ENCODE measurements at regions of chr14 and their contacts with region 1.

Region 1: GRCh38 chr14:56514663-56515371 is 64.8 kb upstream of the TMEM260 start:
- DNase-seq: no peak

Region 2: DNA sequence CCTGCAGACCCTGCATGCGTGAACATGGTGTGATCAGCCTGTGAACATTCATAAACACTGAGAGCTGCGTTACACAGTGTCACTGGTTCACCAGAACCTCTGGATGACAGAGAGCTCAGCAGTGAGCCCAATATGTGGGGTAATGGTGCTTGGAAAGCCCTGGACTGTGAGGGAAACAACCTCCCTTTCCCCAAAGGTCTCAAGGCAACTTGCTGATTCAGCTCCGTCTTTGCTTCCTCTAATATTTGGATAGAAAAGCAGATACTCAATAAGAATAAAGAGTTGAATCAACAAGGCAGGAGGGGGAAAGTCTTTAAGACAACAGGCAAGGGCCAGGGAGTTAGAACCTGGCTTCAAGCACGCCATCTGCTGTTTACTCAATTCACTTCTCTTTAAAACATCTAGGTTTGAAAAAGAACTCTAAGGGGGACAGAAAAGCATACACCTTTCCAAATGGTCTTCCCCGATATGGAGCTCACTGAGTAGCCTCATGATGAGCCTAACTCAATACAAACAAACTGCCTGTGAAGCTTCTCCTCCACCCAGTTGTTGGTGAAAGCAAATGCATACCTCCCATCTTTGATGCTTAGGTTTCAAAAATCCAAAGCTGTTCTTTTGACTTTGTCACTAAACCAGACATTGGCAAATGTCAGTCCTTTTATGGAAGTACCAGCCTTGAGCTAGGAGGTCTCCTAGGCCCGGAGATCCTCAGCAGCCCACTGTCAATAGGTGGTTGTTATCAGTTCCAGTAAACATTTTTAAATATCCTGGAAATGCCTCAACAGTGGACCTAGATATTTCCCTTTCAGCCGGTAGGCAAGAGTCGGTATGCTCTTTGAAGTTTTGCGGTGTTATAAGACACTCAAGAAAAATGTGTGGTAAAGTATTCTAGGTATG is 1871.8 kb before region 1 on chr14:
- intact Hi-C with region 1: no loop called
- DNase-seq: no peak

Region 3: DNA sequence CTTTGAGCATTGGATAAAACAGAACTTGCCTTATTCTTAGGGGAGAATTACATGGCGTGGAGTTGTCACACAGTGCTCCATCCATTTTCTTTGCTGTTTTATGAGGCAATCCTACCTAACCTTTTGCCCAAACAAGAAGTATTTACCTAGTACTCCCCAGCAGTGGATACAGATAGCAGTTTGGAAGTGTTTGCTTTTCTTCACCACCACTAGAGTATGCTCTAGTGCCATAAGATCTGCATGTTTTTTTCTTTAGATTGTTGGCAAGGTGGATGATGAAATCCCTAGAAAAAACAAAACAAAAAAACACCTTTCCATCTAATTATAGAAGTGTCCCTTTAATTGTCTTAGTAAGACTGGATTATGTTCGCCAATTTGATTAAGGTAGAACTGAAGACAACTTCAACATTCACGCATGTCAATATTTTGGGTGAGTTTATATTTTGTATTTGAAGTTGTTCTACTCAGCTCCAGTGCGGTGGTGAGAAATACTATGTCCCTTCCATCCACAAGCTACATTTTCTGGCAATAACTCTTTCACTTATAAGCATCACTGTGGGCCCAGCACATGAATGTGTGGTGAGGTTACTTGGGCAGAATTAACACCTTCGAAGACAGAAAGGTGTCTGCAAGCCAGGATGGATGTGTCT is 41.2 kb after region 1 on chr14:
- intact Hi-C with region 1: loop called in 1 of 2 experiments (anchors 1 kb)
- DNase-seq: no peak

Measured in posterior vena cava (tissue), 2 donors.